Activated naive CD4-positive, alpha-beta T cell treated with anti-CD3 and anti-CD28 coated beads for 36 hours (primary cell): ENCODE measurements at regions of chr10 and their contacts with region 1.

Region 1: GRCh38 chr10:69800109-69800508 is 1.6 kb upstream of the COL13A1 start:
- DNase-seq: peak; percentile 37
- H3K4me3 Mint-ChIP-seq: no peak overlapping the region
- H3K27ac Mint-ChIP-seq: no peak overlapping the region
- H3K4me1 Mint-ChIP-seq: peaks cover 9% of the 10 kb centered on the region
- H3K27me3 Mint-ChIP-seq: peaks cover 41% of the 10 kb centered on the region

Region 2: DNA sequence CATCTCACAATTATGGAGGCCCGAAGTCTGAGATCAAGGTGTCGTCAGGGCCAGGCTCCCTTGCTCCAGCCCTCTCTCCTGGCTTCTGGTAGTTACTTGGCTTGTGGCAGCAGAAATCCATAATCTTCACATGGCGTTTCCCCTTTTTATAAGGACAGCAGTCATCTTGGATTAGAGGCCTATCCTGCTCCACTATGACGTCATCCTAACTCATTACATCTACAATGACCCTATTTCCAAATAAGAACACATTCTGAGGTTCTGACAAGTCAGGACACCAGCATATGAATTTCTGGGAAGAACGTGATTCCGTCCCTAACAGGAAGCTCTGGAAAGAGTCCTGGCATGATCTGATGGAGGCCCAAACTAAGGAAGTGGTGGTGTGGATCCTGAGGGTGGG is 262.7 kb before region 1 on chr10:
- CTCF ChIA-PET with region 1: no interaction called
- intact Hi-C with region 1: no loop called
- DNase-seq: no peak
- H3K4me3 Mint-ChIP-seq: no peak overlapping the region
- H3K27ac Mint-ChIP-seq: no peak overlapping the region
- H3K4me1 Mint-ChIP-seq: no peaks in the 10 kb centered on the region
- H3K27me3 Mint-ChIP-seq: no peaks in the 10 kb centered on the region

Region 3: DNA sequence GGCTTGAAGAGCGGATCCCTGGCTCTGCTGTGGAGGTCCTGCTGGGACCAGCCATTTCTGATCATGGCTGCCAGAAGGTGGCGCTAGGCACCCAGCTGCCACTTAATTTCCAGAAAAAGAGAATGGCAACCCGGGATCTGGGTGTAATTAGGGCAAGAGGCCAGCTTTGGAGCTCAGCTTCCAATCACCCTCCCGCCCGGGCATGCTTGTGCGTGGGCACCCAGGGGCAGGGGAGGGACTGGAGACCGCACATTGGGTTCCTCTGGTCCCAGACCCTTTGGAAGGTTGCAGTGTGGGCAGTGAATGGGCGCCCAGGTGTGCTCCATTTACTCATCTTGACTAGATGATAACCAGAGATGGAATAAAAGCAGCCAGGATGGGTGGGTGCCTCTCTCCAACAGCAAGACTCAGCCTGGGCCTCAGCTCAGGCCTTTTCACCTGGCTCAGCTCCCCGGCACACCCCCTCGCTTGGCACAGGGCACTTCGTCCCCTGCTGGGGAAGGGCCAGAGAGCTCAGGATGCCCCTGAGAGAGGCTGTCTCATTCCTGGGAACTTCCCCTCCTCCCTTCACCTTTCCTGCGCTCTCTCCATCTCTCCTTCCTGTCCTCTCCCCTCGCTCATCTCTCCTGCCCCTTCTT is 155.3 kb before region 1 on chr10:
- CTCF ChIA-PET with region 1: interaction called, 4 read pairs
- intact Hi-C with region 1: loop called (anchors 2 kb)
- DNase-seq: peak; percentile 63
- H3K4me3 Mint-ChIP-seq: no peak overlapping the region
- H3K27ac Mint-ChIP-seq: no peak overlapping the region
- H3K4me1 Mint-ChIP-seq: no peaks in the 10 kb centered on the region
- H3K27me3 Mint-ChIP-seq: peaks cover 1% of the 10 kb centered on the region

Region 4: DNA sequence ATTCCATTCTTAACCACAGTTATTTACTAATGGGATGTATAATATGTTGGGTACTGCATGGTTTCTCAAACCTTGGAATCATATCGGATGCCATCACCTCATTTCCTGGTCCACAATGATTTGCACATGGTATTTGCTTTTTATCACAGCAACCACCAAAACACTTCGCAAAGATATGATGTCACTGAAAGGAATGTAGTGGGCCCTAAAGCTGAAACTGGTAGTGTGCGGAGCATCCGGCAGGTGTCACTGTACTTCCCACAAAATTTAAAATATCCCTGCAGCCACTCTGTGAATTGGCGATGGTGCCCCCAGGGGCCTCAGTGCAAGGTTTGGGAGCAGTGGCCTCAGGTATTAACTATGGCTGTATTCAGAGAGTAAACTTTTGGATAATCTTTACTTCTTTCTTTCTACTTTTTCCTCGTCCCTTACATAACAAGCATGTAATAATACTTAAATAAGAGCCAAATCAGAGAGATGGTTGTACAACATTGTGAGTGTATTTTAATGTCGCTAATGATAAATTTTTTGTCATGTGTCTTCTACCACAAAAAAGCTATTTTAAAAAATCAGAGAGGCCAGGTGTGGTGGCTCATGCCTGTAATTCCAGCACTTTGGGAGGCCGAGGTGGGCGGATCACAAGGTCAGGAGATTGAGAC is 103.9 kb before region 1 on chr10:
- CTCF ChIA-PET with region 1: no interaction called
- intact Hi-C with region 1: loop called (anchors 1 kb)
- DNase-seq: peak; percentile 39
- H3K4me3 Mint-ChIP-seq: no peak overlapping the region
- H3K27ac Mint-ChIP-seq: no peak overlapping the region
- H3K4me1 Mint-ChIP-seq: no peaks in the 10 kb centered on the region
- H3K27me3 Mint-ChIP-seq: peaks cover 13% of the 10 kb centered on the region

Region 5: GRCh38 chr10:69749178-69750010 is 50.7 kb before region 1 on chr10:
- CTCF ChIA-PET with region 1: no interaction called
- intact Hi-C with region 1: loop called (anchors 5 kb)
- DNase-seq: no peak
- H3K4me3 Mint-ChIP-seq: no peak overlapping the region
- H3K27ac Mint-ChIP-seq: no peak overlapping the region
- H3K4me1 Mint-ChIP-seq: peaks cover 1% of the 10 kb centered on the region
- H3K27me3 Mint-ChIP-seq: peaks cover 5% of the 10 kb centered on the region